ENCODE measurements at regions of chr2 and their contacts with region 1.

Region 1: GRCh38 chr2:24490674-24491625 is at the start of gene NCOA1:
- DNase-seq: peak; percentile 75 to 98 (median 86)

Region 2: DNA sequence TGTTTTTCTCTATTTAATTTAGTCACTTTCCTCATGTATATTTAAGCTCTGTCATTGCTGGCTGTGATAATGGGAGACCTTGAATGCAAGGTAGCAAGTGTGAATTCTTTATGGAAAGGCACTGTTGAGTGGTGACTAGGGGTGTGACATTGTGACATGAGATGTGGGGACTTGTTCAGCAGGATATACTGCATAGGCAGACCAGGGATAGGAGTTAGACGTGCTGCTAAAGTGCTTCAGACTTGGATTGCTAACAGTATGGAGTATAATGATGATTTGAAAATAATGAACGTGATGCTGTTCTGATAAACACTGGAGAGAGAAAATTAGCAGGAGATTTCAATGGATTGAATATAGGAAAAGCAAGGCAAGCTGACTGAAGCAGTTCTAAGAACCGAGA is 135.2 kb after region 1 on chr2:
- intact Hi-C with region 1: no loop called
- DNase-seq: no peak

Region 3: DNA sequence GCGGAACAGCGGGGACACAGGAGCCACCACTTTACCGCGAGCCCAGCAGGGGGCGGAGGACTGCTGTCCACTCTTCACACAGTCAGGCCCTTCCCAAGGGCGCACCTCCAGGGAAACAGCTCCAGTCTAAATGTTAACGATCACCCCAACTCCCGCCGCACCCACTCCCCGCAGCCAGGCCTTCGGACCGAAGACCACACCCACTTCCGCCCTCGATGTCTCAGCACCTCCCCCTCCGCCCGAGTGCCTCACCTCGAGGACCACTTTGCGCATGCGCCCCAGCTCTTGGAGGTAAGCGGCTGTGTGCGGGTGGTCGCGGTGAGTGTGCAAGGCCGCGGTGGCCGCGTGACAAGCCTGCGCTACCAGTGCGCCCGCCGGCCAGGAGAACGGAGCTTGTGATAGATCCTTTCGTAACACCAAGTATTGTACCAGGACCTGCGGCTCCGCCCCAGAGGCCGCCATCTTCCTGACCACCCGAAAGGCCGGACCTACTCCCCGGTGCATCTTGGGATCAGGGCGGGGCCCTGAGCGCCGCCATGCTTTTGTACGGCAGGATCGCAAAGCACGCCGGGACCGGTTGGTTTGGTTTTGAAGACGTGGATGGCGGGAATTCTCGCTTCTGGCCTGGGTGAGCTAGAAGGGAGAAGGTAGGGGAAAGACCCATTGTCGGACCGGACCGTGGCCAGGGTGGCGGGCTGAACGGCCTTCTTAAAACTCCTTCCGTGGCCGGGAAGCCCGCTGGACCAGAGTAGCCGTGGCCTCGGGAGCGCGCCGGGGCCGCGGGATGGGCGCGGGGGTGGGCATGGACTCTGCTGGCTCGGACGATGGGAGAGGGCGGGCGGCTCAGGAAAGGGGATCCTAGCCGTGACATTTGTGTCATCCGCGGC is 302.2 kb after region 1 on chr2 and contains the starts of genes CENPO and PTRHD1:
- intact Hi-C with region 1: loop called (anchors 2 kb)
- DNase-seq: peak; percentile 93 to 99 (median 96)

Region 4: DNA sequence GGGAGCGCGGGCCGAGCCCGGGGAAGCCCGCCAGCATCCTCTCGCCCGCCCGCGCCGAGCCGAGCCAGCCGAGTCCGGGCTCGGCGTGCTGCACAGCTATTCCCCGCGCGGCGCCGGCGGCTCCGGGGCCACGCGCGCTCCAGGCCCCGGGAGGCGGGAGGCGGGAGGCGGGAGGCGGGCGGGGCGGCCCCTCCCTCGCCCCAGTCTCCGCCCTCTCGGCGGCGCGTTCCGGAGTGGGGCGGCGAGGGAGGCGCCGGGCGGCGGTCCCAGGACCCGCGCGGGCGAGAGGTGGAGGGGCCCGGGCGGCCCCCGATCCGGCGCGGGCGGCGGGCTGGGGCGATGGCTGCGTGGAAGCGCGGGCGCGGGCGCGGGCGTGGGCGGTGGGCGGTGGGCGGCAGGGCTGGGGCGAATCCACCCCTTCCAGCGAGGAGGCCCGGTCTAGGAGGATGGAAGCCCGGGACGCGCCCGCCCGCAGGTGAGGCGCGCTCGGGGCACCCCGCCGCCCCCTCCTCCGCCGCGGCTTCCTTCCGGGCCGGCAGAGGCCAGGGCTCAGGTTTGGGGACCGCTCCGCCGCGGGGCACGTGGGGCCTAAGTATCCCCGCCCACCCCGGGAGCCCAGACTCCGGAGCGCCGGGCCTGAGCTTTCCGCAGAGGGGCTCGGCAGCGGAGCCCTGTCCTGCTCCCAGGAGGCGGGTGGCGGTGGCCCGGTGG is 429.3 kb after region 1 on chr2 and contains the start of gene ADCY3:
- intact Hi-C with region 1: loop called (anchors 10 kb)
- DNase-seq: peak; percentile 43 to 92 (median 66)

Measured in posterior cingulate gyrus (tissue), 11 donors.